PC-9 (cell line): ENCODE measurements at regions of chr10 and their contacts with region 1.

Region 1: GRCh38 chr10:14604181-14605142 is 170.2 kb downstream of the FAM107B start:
- DNase-seq: peak in 1 of 2 experiments; percentile 81
- H3K4me3 ChIP-seq: peak overlapping the region; percentile 81
- H3K27ac ChIP-seq: peak overlapping the region; percentile 95
- H3K4me1 ChIP-seq: peaks cover 29% of the 10 kb centered on the region
- H3K27me3 ChIP-seq: no peaks in the 10 kb centered on the region
- CTCF ChIP-seq: no peak

Region 2: DNA sequence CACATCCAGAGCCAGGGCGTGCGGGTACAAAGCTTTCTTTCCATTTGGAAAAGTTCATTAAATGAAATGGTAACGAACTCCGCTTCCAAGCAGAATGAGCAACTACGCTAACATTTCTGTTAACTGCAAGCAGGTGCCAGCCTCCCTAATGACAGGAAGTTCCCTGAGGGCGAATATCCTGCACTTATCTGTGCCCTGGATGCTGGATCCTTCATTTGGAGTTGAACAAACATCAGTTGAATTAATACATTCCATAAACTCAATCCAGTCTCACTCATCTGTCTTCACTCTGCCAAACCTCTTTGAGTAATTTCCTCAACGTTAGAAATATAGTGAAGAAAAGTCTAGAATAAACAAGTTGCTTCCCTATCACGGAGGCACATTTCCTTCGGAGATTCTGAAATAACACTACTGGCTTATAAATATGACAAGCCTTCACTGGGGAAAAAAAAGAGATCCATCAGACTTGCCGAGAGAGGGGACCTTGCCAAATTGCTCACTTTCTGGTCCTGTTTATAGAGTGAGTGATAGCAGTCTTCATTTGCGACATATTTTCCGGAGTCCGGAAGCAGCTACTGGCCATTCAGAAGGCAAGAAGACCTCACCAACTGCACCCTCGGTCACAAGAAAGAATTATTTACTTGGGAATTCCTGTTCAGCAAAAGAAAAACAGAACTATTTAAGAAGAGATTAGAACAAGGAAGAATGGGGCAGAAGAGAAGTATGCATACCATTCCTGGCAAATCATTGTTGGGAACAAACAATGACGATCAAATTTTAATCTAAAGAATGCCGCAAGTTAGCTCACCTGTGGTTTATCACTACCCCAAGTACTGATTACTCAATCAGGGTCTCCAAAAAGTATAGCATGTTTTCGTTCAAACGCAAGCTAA is 26.2 kb before region 1 on chr10:
- CTCF ChIA-PET with region 1: no interaction called
- POLR2A ChIA-PET with region 1: interaction called, 3 read pairs
- intact Hi-C with region 1: loop called (anchors 1 kb)
- DNase-seq: peak; percentile 66 to 97
- H3K4me3 ChIP-seq: peak overlapping the region; percentile 46
- H3K27ac ChIP-seq: peak overlapping the region; percentile 95
- H3K4me1 ChIP-seq: peaks cover 88% of the 10 kb centered on the region
- H3K27me3 ChIP-seq: no peaks in the 10 kb centered on the region
- CTCF ChIP-seq: no peak

Region 3: DNA sequence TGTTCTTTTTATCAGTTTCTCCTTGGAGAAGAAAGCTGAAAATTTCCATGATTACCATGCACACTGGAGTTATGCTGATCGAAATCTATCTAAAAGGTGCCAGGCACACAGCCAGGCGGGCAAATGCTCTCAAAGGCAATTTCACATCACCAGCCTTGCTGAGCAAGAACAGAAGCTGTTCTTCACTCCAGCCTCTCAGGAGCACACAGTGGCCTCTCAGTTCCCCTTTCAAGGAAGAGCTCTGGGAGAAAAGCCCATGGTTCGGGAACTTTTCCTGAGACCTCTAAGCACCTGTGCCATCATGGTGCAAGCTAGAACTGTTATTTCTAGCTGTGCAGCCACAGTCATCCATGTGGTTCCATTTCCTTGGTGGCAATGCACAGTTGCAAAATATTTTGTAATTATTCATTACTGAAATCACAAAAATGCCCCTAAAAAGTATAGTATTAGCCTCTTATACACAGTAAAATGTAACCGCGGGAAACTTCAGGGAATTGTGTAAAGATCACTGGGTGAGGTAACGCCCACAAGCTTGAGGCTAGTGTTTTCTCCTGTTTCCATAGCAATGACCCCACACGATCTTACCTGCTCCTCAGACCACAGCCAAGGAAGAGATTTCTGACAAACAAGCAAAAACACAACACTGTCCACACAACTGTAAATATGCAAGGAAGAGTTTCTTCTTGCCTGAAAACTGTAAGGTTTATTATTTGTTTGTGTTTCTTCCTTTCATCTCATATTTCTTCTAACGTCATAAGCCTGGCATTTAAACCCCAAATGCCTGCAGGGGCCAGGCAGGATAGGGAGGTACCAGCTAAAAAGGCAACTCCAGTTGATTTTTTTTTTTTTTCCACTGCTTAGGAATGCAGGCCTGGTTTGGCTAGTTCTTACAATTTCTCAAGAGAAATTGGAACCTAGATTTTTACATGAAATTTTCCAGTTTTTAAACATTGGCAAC is 49.1 kb after region 1 on chr10:
- CTCF ChIA-PET with region 1: no interaction called
- POLR2A ChIA-PET with region 1: no interaction called
- intact Hi-C with region 1: loop called (anchors 1 kb)
- DNase-seq: peak; percentile 80 to 96
- H3K4me3 ChIP-seq: peak overlapping the region; percentile 51
- H3K27ac ChIP-seq: peak overlapping the region; percentile 92
- H3K4me1 ChIP-seq: peaks cover 73% of the 10 kb centered on the region
- H3K27me3 ChIP-seq: no peaks in the 10 kb centered on the region
- CTCF ChIP-seq: no peak

Region 4: DNA sequence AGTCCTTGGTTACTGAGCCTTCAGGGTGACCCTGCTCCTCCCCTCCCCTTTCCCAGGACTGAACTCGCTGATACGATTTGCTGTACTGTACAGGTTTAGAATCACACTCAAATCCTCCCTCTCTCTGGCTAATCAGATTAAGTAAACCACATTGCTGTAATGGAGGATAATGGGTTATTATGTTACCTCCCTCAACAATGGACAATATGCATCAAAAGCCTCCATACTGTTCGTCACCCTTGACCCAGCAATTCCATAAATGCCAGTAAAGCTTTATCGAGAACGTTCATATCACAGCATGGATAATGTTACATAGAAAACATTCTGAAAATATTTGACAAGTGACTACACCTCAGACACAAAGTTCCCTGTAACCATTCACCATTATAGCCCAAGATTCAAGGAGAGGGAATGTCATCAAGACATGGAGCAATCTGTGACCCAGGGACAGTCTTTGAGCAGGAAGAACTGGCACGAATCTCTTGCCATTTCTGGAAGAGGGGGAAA is 108.6 kb after region 1 on chr10:
- CTCF ChIA-PET with region 1: no interaction called
- POLR2A ChIA-PET with region 1: no interaction called
- intact Hi-C with region 1: loop called (anchors 1 kb)
- DNase-seq: peak; percentile 54 to 90
- H3K4me3 ChIP-seq: no peak overlapping the region; the same call in 1 of the 2 replicates
- H3K27ac ChIP-seq: peak overlapping the region; percentile 76
- H3K4me1 ChIP-seq: peaks cover 20% of the 10 kb centered on the region
- H3K27me3 ChIP-seq: no peaks in the 10 kb centered on the region
- CTCF ChIP-seq: no peak

Region 5: GRCh38 chr10:14748470-14748869 is 144.0 kb after region 1 on chr10:
- CTCF ChIA-PET with region 1: no interaction called
- POLR2A ChIA-PET with region 1: interaction called, 7 read pairs
- intact Hi-C with region 1: loop called (anchors 1 kb)
- DNase-seq: peak; percentile 92 to 93
- H3K4me3 ChIP-seq: no peak overlapping the region
- H3K27ac ChIP-seq: peak overlapping the region; percentile 80
- H3K4me1 ChIP-seq: peaks cover 27% of the 10 kb centered on the region
- H3K27me3 ChIP-seq: no peaks in the 10 kb centered on the region
- CTCF ChIP-seq: no peak

Region 6: GRCh38 chr10:14878266-14879054 is 274.0 kb after region 1 on chr10 and contains the start of gene SUV39H2:
- CTCF ChIA-PET with region 1: no interaction called
- POLR2A ChIA-PET with region 1: no interaction called
- intact Hi-C with region 1: loop called (anchors 2 kb)
- DNase-seq: peak; percentile 76 to 96
- H3K4me3 ChIP-seq: peak within 1 kb of the TSS; percentile 67
- H3K27ac ChIP-seq: peak within 1 kb of the TSS; percentile 79
- H3K4me1 ChIP-seq: peaks cover 24% of the 10 kb centered on the region
- H3K27me3 ChIP-seq: no peaks in the 10 kb centered on the region
- CTCF ChIP-seq: no peak
- total RNA-seq, gene SUV39H2: 13.4 and 20.9 TPM in 2 replicates